HepG2 (cell line): ENCODE measurements at regions of chr2 and their contacts with region 1.

Region 1: DNA sequence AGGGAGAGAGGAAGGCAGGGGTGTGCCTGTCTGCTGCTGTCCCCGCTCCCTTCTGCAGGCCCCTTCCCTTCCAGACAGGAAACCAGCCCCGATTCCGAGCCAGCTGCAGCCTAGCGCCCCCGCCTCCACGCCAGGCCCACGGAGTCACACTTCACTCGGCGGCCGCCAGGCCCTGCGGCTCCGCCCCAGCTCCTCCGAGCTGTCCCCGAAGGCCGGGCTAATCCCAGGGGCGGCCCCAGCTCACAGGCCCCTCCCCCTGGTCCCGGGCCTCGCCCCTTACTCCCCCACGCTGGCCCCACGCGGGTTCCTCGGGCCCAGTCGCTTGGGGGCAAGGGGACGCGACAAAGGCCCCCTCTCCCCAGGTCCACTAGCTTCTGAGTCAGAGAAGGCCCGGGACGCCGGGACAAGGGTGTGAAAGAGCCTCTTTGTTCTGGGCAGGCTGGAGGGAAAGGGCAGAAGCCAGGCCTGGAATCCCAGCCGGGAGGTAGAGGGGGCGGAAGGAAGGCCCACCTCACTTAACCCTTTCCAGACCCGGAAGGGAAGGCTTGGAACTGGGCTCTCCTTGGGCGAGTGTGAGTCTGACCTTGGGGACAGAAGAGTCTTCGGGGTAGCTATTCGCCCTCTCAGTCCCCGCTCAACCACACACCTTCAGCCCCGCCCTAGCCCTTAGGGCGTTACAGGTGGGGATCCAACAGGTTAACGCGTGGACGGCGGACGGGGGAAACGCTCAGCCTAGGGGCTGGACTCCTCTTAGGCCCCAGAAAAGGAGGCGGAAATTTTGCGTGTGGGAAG is 1.2 kb downstream of the RTKN start:
- DNase-seq: peak; percentile 95
- ATAC-seq: peak; percentile 80
- H3K4me3 ChIP-seq: peak overlapping the region; percentile 76 to 94 (median 93)
- H3K27ac ChIP-seq: peak overlapping the region; percentile 91
- H3K4me1 ChIP-seq: peaks cover 66% of the 10 kb centered on the region
- H3K27me3 ChIP-seq: no peaks in the 10 kb centered on the region; a peak in 1 of 5 replicates
- CTCF ChIP-seq: peak; percentile 71
- EP300 ChIP-seq: peak; percentile 12 to 62; a peak in 2 of 4 replicates
- POLR2A ChIP-seq: peak; percentile 58 to 73
- RAD21 ChIP-seq: peak; percentile 66

Region 2: GRCh38 chr2:73588177-73588576 is 852.4 kb before region 1 on chr2:
- CTCF ChIA-PET with region 1: no interaction called
- POLR2A ChIA-PET with region 1: no interaction called
- in situ Hi-C with region 1: no loop called
- intact Hi-C with region 1: no loop called
- DNase-seq: no peak
- ATAC-seq: peak; percentile 24; the same call in 1 of the 3 replicates
- H3K4me3 ChIP-seq: no peak overlapping the region
- H3K27ac ChIP-seq: no peak overlapping the region
- H3K4me1 ChIP-seq: peaks cover 5% of the 10 kb centered on the region; the same call in 1 of the 2 replicates
- H3K27me3 ChIP-seq: no peaks in the 10 kb centered on the region
- CTCF ChIP-seq: no peak
- EP300 ChIP-seq: no peak
- POLR2A ChIP-seq: no peak
- RAD21 ChIP-seq: no peak

Region 3: DNA sequence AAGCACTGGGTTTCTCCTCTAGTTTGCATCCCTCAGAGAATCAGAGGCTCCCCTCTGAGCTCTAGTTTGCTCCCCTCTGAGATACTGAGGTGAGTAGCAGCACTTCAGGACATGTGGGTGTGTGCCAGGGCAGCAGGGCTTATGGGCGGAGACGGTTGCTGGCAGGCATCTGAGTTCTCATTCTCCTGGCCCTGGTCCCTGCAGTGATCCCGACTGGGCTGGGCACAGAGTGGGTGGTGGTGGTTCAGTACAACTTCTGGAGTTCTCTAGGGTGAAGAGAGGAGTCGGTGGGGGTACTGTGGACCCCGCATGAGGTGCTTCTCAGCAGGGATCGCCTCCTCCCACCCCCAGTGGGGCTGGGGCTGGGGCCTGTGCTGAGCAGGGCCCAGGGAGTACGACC is 340.7 kb before region 1 on chr2:
- CTCF ChIA-PET with region 1: no interaction called
- POLR2A ChIA-PET with region 1: no interaction called
- in situ Hi-C with region 1: no loop called
- intact Hi-C with region 1: no loop called
- DNase-seq: no peak
- ATAC-seq: peak; percentile 13
- H3K4me3 ChIP-seq: no peak overlapping the region
- H3K27ac ChIP-seq: no peak overlapping the region
- H3K4me1 ChIP-seq: no peaks in the 10 kb centered on the region
- H3K27me3 ChIP-seq: no peaks in the 10 kb centered on the region
- CTCF ChIP-seq: no peak
- EP300 ChIP-seq: no peak
- POLR2A ChIP-seq: no peak
- RAD21 ChIP-seq: no peak

Region 4: GRCh38 chr2:74421221-74421870 is 19.2 kb before region 1 on chr2 and contains the starts of genes C2orf81 and WDR54:
- CTCF ChIA-PET with region 1: interaction called, 3 read pairs
- POLR2A ChIA-PET with region 1: interaction called, 272 read pairs
- in situ Hi-C with region 1: no loop called
- intact Hi-C with region 1: loop called (anchors 1 kb)
- DNase-seq: peak; percentile 75
- ATAC-seq: peak; percentile 78
- H3K4me3 ChIP-seq: peak within 1 kb of the TSS; percentile 50 to 75 (median 54)
- H3K27ac ChIP-seq: no peak within 1 kb of the TSS
- H3K4me1 ChIP-seq: peaks cover 54% of the 10 kb centered on the region
- H3K27me3 ChIP-seq: peaks cover 0 to 7% of the 10 kb centered on the region in 2 experiments; a peak in 2 of 5 replicates
- CTCF ChIP-seq: peak; percentile 14; the same call in 1 of the 2 replicates
- EP300 ChIP-seq: no peak
- POLR2A ChIP-seq: peak; percentile 37 to 41; a peak in 2 of 4 replicates
- RAD21 ChIP-seq: no peak; the same call in 1 of the 2 replicates
- total RNA-seq, gene C2orf81: 0.13 and 0.15 TPM in 2 replicates
- total RNA-seq, gene WDR54: 1.3 and 2.0 TPM in 2 replicates

Region 5: GRCh38 chr2:74458132-74458925 is 17.8 kb after region 1 on chr2 and contains the start of gene WBP1:
- CTCF ChIA-PET with region 1: no interaction called
- POLR2A ChIA-PET with region 1: interaction called, 342 read pairs
- in situ Hi-C with region 1: no loop called
- intact Hi-C with region 1: loop called (anchors 1 kb)
- DNase-seq: peak; percentile 100
- ATAC-seq: peak; percentile 92
- H3K4me3 ChIP-seq: peak within 1 kb of the TSS; percentile 76 to 92 (median 88)
- H3K27ac ChIP-seq: peak within 1 kb of the TSS; percentile 89
- H3K4me1 ChIP-seq: peaks cover 41% of the 10 kb centered on the region
- H3K27me3 ChIP-seq: no peaks in the 10 kb centered on the region; a peak in 1 of 5 replicates
- CTCF ChIP-seq: no peak
- EP300 ChIP-seq: no peak; a peak in 1 of 4 replicates
- POLR2A ChIP-seq: peak in 1 of 2 experiments; percentile 62; a peak in 2 of 4 replicates
- RAD21 ChIP-seq: 0 out of 2 replicates have a peak, but pooled peaks have one; percentile 26
- total RNA-seq, gene WBP1: 26.5 and 38.8 TPM in 2 replicates

Region 6: GRCh38 chr2:74482801-74483674 is 42.5 kb after region 1 on chr2 and contains the starts of genes CCDC142 and TTC31:
- CTCF ChIA-PET with region 1: no interaction called
- POLR2A ChIA-PET with region 1: interaction called, 19 read pairs
- in situ Hi-C with region 1: no loop called
- intact Hi-C with region 1: no loop called
- DNase-seq: peak; percentile 97
- ATAC-seq: peak; percentile 91
- H3K4me3 ChIP-seq: peak within 1 kb of the TSS; percentile 82 to 87 (median 83)
- H3K27ac ChIP-seq: peak within 1 kb of the TSS; percentile 89
- H3K4me1 ChIP-seq: peaks cover 70% of the 10 kb centered on the region
- H3K27me3 ChIP-seq: no peaks in the 10 kb centered on the region; a peak in 1 of 5 replicates
- CTCF ChIP-seq: peak; percentile 99
- EP300 ChIP-seq: 0 out of 4 replicates have a peak, but pooled peaks of 1 of the 2 experiments have one; percentile 31
- POLR2A ChIP-seq: peak; percentile 75 to 89
- RAD21 ChIP-seq: peak; percentile 94
- total RNA-seq, gene CCDC142: 8.8 and 30.4 TPM in 2 replicates
- total RNA-seq, gene TTC31: 21.1 and 28.3 TPM in 2 replicates

Region 7: GRCh38 chr2:74498500-74499266 is 58.1 kb after region 1 on chr2:
- CTCF ChIA-PET with region 1: no interaction called
- POLR2A ChIA-PET with region 1: interaction called, 32 read pairs
- in situ Hi-C with region 1: no loop called
- intact Hi-C with region 1: loop called (anchors 2 kb)
- DNase-seq: no peak
- ATAC-seq: no peak
- H3K4me3 ChIP-seq: peak overlapping the region; percentile 32 to 66 (median 53); a peak in 5 of 6 replicates
- H3K27ac ChIP-seq: peak overlapping the region; percentile 70
- H3K4me1 ChIP-seq: peaks cover 66% of the 10 kb centered on the region
- H3K27me3 ChIP-seq: no peaks in the 10 kb centered on the region; a peak in 1 of 5 replicates
- CTCF ChIP-seq: no peak
- EP300 ChIP-seq: no peak
- POLR2A ChIP-seq: peak in 1 of 2 experiments; percentile 66; a peak in 2 of 4 replicates
- RAD21 ChIP-seq: no peak

Region 8: DNA sequence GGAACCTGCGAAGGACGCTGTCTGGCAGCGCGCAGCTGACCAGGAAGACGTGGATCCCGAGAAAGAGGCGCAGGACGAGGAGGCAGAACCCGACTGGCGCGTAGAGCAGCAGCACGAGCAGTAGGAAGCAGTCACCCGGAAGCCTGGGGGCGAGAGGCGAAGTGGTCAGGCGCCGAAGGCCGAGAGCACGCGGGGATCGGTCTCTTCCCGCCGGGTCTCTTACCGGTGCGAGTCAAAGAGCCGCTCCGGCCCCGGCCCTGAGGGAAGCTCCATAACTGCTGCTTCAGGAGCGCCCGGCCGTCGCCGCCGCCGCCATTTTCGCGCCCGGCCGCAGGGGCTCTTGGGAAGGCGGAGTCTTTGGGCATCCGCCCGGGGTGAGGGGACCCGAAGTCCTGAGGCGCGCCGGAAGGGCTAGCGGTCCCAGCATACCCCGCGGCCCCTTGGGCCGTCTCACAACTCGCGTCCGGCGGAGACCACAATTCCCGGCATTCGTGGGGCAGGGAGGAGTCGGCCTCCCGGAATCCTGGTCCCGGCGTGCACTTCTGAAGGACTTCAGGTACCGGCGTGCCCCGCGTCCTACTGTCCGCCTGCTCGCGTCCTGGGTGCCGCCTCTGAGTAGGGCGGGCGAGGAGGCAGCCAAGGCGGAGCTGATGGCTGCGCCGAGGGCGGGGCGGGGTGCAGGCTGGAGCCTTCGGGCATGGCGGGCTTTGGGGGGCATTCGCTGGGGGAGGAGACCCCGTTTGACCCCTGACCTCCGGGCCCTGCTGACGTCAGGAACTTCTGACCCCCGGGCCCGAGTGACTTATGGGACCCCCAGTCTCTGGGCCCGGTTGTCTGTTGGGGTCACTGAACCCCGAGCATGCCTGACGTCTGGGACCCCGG is 89.0 kb after region 1 on chr2 and contains the starts of genes AUP1 and HTRA2:
- CTCF ChIA-PET with region 1: no interaction called
- POLR2A ChIA-PET with region 1: interaction called, 10 read pairs
- in situ Hi-C with region 1: no loop called
- intact Hi-C with region 1: no loop called
- DNase-seq: peak; percentile 98
- ATAC-seq: peak; percentile 90
- H3K4me3 ChIP-seq: peak within 1 kb of the TSS; percentile 84 to 100 (median 100)
- H3K27ac ChIP-seq: peak within 1 kb of the TSS; percentile 95
- H3K4me1 ChIP-seq: peaks cover 55% of the 10 kb centered on the region
- H3K27me3 ChIP-seq: no peaks in the 10 kb centered on the region; a peak in 1 of 5 replicates
- CTCF ChIP-seq: peak; percentile 33
- EP300 ChIP-seq: peak; percentile 58 to 73; a peak in 2 of 4 replicates
- POLR2A ChIP-seq: peak; percentile 82 to 89
- RAD21 ChIP-seq: peak; percentile 52
- total RNA-seq, gene AUP1: 67.0 and 174 TPM in 2 replicates
- total RNA-seq, gene HTRA2: 37.0 and 47.7 TPM in 2 replicates

Region 9: DNA sequence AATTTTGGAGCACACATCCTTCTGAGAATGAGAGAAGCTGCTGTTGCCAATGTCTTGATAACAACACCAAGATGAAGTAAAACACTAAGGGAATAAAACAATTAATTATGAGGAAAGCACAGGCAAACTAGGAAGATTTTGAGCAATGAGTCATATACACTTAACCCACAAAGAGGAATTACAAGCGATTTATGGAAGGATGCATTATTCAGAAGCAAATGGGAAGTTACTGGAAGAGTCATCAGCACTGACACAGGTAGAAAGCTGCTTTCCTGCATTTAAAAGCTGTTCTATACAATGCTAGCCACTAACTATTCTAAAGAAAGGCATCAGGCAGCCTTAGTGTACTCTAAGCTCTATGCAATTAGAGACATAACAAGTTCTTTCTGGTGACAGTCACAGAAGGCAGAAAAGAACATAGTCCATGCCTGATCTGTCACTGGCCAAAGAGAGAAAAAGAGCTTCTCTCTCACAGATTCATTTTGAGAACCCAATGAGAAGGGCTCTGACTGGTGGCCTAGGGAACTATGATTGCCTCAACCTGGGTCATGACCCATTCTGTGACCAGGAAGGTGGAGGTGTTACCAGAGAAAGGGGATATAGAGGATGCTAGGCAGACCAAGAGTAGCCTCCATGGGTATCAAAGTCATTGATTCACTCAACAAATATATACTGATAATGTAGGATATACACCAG is 162.2 kb after region 1 on chr2:
- CTCF ChIA-PET with region 1: no interaction called
- POLR2A ChIA-PET with region 1: no interaction called
- in situ Hi-C with region 1: no loop called
- intact Hi-C with region 1: no loop called
- DNase-seq: no peak
- ATAC-seq: no peak
- H3K4me3 ChIP-seq: no peak overlapping the region
- H3K27ac ChIP-seq: no peak overlapping the region
- H3K4me1 ChIP-seq: no peaks in the 10 kb centered on the region
- H3K27me3 ChIP-seq: 0 out of 5 replicates have a peak, but pooled peaks cover 0 to 5% of the 10 kb centered on the region in 2 experiments
- CTCF ChIP-seq: no peak
- EP300 ChIP-seq: no peak
- POLR2A ChIP-seq: no peak
- RAD21 ChIP-seq: no peak